Activated CD8-positive, alpha-beta T cell treated with anti-CD3 and anti-CD28 coated beads, Interleukin-2, amount 10 ng/mL, durations not matched to agents 7 days and 5 days (primary cell): ENCODE measurements at regions of chr7 and their contacts with region 1.

Region 1: DNA sequence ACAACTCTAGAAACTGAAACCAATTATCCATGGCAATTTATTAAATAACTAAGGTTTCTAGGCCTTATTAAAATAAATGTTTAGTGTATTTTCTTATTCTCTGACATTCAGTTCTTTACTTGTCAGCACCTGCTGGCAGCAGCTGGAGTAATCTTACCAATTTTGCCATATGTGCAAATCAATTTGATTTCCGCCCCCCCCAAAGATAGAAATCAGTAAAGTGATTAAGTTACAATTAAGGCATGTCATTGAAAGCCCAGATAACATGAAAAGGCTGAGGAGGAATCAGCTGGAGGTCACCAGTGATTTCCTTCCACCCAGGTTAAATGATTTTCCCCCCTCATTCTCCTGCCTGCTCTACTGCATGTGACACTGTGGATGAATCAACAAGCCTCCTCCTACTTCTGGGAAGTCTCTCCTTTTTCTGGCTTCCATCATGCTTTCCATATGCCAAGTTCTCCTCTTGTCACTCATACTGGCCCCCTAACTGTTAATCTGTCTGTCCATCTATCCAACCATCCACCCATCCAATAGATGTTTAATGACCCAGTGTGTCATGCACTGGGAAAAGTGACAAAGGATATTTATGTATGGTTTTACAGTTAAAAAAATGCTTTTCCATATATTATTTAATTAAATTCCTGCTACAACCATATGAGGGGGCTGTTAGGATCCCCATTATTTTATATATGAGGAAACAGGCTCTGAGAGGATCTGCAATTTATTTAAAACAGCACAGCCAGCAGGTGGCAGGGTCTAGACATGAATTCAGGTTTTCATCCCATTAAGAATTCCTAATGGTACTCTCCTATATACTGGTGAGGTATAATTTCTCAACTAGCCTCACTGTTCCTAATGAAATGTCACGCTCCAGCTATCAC is 116.5 kb downstream of the ATXN7L1 start:
- DNase-seq: peak; percentile 32
- ATAC-seq: peak; percentile 21
- H3K4me3 Mint-ChIP-seq: no peak overlapping the region
- H3K27ac Mint-ChIP-seq: no peak overlapping the region
- H3K4me1 Mint-ChIP-seq: peaks cover 29% of the 10 kb centered on the region
- H3K27me3 Mint-ChIP-seq: no peaks in the 10 kb centered on the region

Region 2: GRCh38 chr7:105621617-105622016 is 138.3 kb before region 1 on chr7:
- CTCF ChIA-PET with region 1: no interaction called
- POLR2A ChIA-PET with region 1: no interaction called
- DNase-seq: no peak
- ATAC-seq: no peak
- H3K4me3 Mint-ChIP-seq: no peak overlapping the region
- H3K27ac Mint-ChIP-seq: no peak overlapping the region
- H3K4me1 Mint-ChIP-seq: no peaks in the 10 kb centered on the region
- H3K27me3 Mint-ChIP-seq: no peaks in the 10 kb centered on the region

Region 3: GRCh38 chr7:105707381-105707780 is 52.5 kb before region 1 on chr7:
- CTCF ChIA-PET with region 1: no interaction called
- POLR2A ChIA-PET with region 1: no interaction called
- DNase-seq: no peak
- ATAC-seq: no peak
- H3K4me3 Mint-ChIP-seq: no peak overlapping the region
- H3K27ac Mint-ChIP-seq: no peak overlapping the region
- H3K4me1 Mint-ChIP-seq: peaks cover 11% of the 10 kb centered on the region
- H3K27me3 Mint-ChIP-seq: no peaks in the 10 kb centered on the region

Region 4: DNA sequence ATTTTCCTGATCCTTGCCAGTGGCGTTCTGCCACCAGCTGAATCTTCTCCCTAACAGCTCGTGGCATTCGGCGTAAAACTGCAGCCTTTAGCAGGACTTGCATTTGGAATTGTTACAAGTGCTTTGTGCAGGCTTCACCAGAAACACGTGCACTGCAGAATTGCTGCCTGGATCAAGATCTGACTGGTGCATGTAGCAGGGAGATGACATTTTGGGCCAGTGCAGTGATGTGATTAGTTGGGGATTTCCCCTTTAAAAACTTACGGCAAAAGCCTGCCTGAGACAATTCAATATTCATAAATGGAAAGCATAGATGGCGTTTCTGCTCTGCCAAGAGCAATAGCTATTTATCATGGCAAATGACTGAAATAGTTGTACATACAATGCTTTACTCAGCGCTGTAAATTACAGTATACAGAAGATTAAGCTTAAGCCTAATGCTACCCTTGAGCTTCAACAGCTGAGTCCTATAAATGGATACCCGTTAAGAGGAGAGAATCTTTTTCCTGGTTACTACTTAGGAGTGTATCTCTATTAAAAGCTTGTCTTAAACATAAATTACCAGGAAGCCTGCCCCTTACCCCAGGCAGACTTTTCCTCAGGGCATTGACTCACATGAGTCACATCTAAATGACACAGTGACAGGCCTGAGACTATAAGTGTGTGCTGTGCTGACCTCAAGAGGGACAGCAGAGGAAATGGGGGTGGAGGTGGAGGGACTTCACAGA is 10.2 kb after region 1 on chr7:
- CTCF ChIA-PET with region 1: interaction called, 17 read pairs
- POLR2A ChIA-PET with region 1: interaction called, 4 read pairs
- DNase-seq: no peak
- ATAC-seq: no peak
- H3K4me3 Mint-ChIP-seq: no peak overlapping the region
- H3K27ac Mint-ChIP-seq: no peak overlapping the region
- H3K4me1 Mint-ChIP-seq: no peaks in the 10 kb centered on the region
- H3K27me3 Mint-ChIP-seq: peaks cover 3% of the 10 kb centered on the region

Region 5: DNA sequence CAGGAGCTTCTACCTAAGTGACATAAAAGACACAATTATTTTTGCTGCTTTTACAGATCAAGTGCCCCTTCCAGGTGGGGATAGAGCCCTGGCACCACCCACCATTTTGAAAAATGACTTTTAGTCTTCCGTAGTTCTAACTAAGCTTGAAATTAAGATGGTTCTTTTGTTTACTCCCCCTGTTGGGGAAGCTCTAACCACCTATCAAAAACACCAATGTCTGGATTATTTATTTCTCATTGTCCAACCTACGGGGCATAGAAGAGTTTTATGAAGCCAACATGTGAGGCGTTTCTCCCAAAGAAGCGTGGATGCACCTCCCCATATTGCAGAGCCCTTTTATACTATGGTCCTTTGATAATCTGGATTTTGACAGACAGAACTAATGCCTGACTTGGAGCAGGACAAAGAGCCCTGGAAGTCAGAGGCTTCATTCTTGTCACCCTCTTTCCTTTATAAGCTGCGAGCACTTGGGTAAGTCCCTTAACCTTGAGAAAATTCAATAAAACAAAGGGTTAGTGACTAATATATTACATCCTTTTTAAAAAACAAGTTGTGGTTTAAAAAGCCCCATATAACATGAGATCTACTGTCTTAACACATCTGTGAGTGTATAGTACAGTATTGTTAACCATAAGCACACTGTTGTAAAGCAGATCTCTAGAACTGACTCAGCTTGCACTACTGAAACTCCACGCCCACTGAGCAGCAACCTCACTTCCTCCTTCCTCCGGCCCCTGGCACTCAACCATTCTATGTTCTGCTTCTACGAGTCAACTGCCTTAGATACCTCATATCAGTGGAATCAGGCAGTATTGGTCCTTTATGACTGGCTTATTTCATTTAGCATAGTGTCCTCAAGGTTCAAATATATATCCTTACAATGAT is 49.0 kb after region 1 on chr7:
- CTCF ChIA-PET with region 1: interaction called, 25 read pairs
- POLR2A ChIA-PET with region 1: no interaction called
- DNase-seq: peak; percentile 86
- ATAC-seq: peak; percentile 97
- H3K4me3 Mint-ChIP-seq: peak overlapping the region; percentile 4
- H3K27ac Mint-ChIP-seq: peak overlapping the region; percentile 76
- H3K4me1 Mint-ChIP-seq: peaks cover 54% of the 10 kb centered on the region
- H3K27me3 Mint-ChIP-seq: no peaks in the 10 kb centered on the region

Region 6: DNA sequence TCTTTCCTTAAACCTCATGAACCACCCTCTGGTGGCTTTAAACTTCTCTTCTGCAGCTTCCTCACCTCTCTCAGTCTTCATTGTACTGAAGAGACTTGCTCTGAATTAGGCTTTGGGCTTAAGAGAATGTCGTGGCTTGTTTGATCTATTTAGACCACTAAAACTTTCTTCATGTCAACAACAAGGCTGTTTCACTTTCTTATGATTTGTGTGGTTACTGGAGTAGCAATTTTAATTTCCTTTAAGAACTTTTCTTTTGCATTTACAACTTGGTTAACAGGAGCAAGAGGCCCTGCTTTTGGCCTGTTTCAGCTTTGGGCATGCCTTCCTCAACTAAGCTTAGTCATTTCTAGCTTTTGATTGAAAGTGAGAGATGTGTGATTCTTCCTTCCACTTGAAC is 165.0 kb after region 1 on chr7:
- CTCF ChIA-PET with region 1: interaction called, 28 read pairs
- POLR2A ChIA-PET with region 1: no interaction called
- DNase-seq: peak; percentile 46
- ATAC-seq: peak; percentile 92
- H3K4me3 Mint-ChIP-seq: no peak overlapping the region
- H3K27ac Mint-ChIP-seq: peak overlapping the region; percentile 88
- H3K4me1 Mint-ChIP-seq: peaks cover 27% of the 10 kb centered on the region
- H3K27me3 Mint-ChIP-seq: peaks cover 7% of the 10 kb centered on the region

Region 7: DNA sequence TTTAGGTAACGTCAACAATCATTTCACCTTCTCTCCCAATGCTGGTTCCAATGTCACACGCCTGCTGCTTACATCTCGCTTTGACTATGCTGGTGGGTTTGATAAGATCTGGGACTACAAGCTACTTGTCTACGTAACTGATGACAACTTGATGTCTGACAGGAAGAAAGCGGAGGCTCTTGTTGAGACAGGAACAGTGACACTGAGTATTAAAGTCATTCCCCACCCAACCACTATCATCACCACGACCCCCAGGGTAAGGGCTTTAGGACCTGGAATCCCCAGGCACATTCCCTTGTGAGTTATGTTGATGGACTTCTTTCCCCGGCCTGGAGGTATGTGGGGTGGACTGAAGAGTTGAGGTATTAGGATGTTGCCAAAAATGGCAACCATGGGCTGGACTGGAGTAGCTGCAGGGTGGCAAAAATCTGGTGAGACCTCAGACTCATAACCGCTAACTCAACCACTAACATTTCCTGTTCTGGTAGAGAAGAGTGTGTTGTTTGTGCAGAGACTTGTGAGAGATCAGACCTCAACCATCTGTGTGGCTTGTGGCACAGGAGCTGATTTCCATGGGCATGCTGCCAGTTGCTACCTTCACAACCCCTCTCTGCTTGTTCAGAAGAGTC is 262.4 kb after region 1 on chr7:
- CTCF ChIA-PET with region 1: interaction called, 18 read pairs
- POLR2A ChIA-PET with region 1: interaction called, 4 read pairs
- DNase-seq: peak; percentile 79
- ATAC-seq: peak; percentile 82
- H3K4me3 Mint-ChIP-seq: peak overlapping the region; percentile 8
- H3K27ac Mint-ChIP-seq: peak overlapping the region; percentile 73
- H3K4me1 Mint-ChIP-seq: peaks cover 48% of the 10 kb centered on the region
- H3K27me3 Mint-ChIP-seq: peaks cover 39% of the 10 kb centered on the region